ENCODE measurements at regions of chr16 and their contacts with region 1.

Region 1: DNA sequence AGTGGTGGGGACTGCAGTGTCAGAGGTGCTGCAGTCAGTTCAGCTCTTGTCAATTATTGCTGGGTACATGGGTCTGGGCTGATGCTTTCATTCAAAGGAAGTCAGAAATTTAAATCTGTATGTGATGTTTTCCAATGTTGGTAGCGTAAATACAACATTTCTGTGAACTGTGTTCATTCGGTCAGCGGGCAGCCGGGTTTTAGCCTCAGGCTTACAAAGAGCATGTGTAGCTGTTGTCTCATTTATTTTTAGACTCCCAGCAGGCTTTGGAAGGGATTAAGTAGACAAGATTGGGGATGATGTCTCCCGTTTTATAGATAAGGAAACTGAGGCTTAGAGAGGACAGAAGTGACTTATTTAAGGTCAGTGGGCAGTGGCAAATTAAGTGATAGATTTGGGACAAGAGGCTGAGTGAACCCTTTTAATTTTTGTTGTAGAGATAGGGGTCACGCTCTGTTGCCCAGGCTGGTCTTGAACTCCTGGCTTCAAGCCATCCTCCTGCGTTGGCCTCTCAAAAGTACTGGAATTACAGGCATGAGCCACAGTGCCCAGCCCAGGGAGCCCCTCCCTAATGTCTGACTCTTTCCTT is 8.1 kb downstream of the AQP8 start:
- DNase-seq: no peak
- H3K4me3 ChIP-seq: no peak overlapping the region
- H3K27me3 ChIP-seq: no peaks in the 10 kb centered on the region
- CTCF ChIP-seq: no peak

Region 2: GRCh38 chr16:24906199-24907020 is 318.4 kb before region 1 on chr16:
- CTCF ChIA-PET with region 1: interaction called, 11 read pairs
- POLR2A ChIA-PET with region 1: no interaction called
- DNase-seq: no peak
- H3K4me3 ChIP-seq: no peak overlapping the region
- H3K27me3 ChIP-seq: no peaks in the 10 kb centered on the region
- CTCF ChIP-seq: peak; percentile 58

Region 3: GRCh38 chr16:25126820-25127232 is 98.0 kb before region 1 on chr16:
- CTCF ChIA-PET with region 1: interaction called, 23 read pairs
- POLR2A ChIA-PET with region 1: no interaction called
- DNase-seq: peak; percentile 34
- H3K4me3 ChIP-seq: no peak overlapping the region
- H3K27me3 ChIP-seq: no peaks in the 10 kb centered on the region
- CTCF ChIP-seq: peak; percentile 77

Region 4: DNA sequence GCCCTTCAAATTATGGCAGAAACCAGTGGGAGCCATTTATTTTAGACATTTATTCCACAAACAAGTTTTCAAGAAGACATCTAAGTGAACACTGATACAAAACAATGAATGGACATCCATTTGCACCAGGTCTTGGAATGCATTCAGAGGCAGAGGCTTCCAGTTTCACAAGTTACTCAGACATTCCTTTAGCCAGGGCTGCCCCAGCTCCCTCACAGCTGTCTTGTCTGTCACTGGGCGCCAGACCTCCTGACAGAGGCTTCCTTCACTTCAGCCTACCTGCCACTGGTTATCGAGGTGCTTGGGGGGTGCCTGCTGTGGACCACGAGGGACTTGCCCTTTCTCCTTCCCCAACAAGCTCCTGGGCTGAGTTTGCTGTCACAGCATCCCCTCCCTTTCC is 11.2 kb after region 1 on chr16:
- CTCF ChIA-PET with region 1: interaction called, 32 read pairs
- POLR2A ChIA-PET with region 1: no interaction called
- DNase-seq: no peak
- H3K4me3 ChIP-seq: no peak overlapping the region
- H3K27me3 ChIP-seq: no peaks in the 10 kb centered on the region
- CTCF ChIP-seq: no peak